ENCODE measurements at regions of chr10 and their contacts with region 1.

Region 1: GRCh38 chr10:112454910-112455779 is 8.1 kb downstream of the VTI1A start:
- DNase-seq: no peak
- H3K4me3 ChIP-seq: no peak overlapping the region
- H3K27ac ChIP-seq: no peak overlapping the region
- H3K4me1 ChIP-seq: no peaks in the 10 kb centered on the region
- H3K27me3 ChIP-seq: no peaks in the 10 kb centered on the region
- CTCF ChIP-seq: no peak

Region 2: DNA sequence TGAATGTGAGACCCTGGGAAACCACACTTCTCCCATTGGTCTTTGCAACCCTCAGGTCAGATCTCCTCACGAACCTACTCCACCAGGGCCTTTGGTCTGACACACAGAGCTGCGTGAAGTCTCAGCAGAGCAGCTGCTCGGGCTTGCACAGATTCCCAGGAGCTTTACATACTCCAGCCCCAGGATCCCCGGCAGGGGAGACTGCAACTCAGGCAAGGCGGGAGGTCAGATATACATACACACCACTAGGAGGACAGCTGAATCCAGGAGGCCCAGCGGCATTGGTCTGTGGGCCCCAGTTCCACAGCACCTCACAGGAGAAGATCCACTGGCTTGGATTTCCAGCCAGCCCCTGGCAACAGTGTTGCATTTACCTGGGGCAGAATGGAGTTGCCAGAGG is 510.8 kb before region 1 on chr10:
- intact Hi-C with region 1: loop called (anchors 5 kb)
- DNase-seq: no peak
- H3K4me3 ChIP-seq: no peak overlapping the region
- H3K27ac ChIP-seq: no peak overlapping the region
- H3K4me1 ChIP-seq: no peaks in the 10 kb centered on the region
- H3K27me3 ChIP-seq: no peaks in the 10 kb centered on the region
- CTCF ChIP-seq: no peak